Gastrocnemius medialis (tissue), 4 donors: ENCODE measurements at regions of chr17 and their contacts with region 1.

Region 1: DNA sequence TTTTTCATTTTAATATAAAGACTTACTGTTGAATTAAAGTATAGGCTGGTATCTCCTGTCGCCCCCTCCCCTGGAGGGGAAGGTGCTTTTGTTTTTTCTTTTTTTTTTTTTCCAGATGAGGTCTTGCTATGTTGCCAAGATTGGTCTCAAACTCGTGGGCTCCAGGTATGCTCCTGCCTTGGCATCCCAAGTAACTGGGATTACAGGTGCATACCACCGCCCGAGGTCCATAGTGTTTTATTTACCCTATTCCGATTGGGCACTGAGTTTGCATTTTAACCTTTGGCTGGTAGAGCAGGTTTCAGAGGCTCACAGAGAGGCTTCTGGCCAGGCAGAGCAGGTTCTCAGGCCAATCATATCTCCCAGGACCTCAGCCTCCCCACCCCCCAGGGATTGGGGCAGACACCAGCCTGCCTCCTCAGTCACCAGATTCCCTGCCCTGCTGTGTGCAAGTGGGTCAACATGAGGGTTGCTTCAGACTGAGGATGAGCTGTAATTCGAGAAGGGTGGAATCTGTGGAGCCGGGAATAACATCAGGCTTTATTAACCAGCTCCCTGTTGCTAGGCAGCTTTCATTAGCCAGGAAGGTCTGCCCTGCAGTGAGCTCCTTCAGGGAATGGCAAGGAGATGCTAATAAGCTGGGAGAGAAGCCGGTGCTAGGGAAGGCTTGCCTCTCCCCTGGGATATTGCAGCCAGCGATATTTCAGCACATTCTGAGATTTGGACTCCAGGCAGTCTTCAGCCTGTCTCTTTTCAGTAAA is 10.4 kb downstream of the SGSM2 start:
- DNase-seq: peak; percentile 87 to 91
- ATAC-seq: peak; percentile 98 to 99
- H3K4me3 ChIP-seq: no peak overlapping the region
- H3K27ac ChIP-seq: peak overlapping the region; percentile 79 to 87 (median 84)
- H3K4me1 ChIP-seq: peaks cover 11 to 14% of the 10 kb centered on the region in 2 donors
- H3K27me3 ChIP-seq: no peaks in the 10 kb centered on the region
- CTCF ChIP-seq: no peak
- POLR2A ChIP-seq: no peak

Region 2: DNA sequence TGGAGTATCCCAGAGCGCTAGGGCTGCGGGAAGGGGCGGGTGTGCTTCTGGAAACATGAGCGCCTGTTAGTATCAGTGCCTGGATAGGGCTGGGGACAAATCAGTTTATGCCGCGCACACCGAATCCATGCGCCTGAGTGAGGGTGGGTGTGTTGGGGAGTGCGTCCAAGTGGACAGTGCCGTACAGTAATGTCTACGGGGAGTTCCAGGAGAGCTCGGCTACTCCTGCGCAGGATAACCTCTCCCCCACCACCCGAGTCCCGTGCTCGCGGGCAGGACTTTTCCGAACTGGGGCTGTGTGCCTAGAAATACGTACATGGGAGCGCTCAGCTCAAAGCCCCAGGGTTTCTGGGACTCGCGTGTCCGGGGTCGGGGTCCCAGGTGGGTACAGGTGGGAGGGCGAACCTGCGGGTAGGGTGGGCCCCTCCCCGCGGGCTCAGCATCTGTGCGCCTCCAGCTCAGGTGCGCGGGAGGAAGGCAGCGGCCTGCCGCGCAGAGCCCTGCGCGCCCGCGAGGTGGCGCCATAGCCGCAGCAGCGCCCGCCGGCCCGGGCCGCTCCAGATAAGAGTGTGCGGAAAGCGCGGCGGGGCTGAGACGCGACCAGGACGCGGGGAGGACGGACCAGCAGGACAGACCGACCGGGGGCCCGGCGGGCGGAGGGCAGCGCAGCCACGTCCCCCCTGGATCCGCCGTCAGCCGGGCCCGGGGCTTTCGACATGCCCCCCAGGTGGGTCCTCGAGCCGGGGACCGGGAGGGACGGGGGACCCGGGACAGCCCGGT is 293.0 kb before region 1 on chr17 and contains the start of gene HIC1:
- in situ Hi-C with region 1: no loop called
- intact Hi-C with region 1: loop called (anchors 5 kb)
- DNase-seq: peak; percentile 52 to 63
- ATAC-seq: peak; percentile 53 to 63
- H3K4me3 ChIP-seq: peak within 1 kb of the TSS; percentile 52 to 67 (median 64)
- H3K27ac ChIP-seq: peak within 1 kb of the TSS; percentile 70 to 82 (median 76)
- H3K4me1 ChIP-seq: peaks cover 0 to 28% of the 10 kb centered on the region in 2 donors
- H3K27me3 ChIP-seq: peaks cover 0 to 14% (median 0%) of the 10 kb centered on the region in 3 donors
- CTCF ChIP-seq: peak; percentile 78 to 99 (median 98)
- POLR2A ChIP-seq: peak; percentile 55 to 71
- total RNA-seq, gene HIC1: 4.6 to 9.6 (median 6.9) TPM

Region 3: GRCh38 chr17:2303204-2304188 is 44.2 kb before region 1 on chr17 and contains the starts of genes SMG6 and SRR:
- in situ Hi-C with region 1: no loop called
- intact Hi-C with region 1: loop called (anchors 2 kb)
- DNase-seq: peak; percentile 81 to 89
- ATAC-seq: peak; percentile 93 to 94
- H3K4me3 ChIP-seq: peak within 1 kb of the TSS; percentile 66 to 83 (median 79)
- H3K27ac ChIP-seq: peak within 1 kb of the TSS; percentile 81 to 92 (median 90)
- H3K4me1 ChIP-seq: peaks cover 11 to 12% of the 10 kb centered on the region in 2 donors
- H3K27me3 ChIP-seq: no peaks in the 10 kb centered on the region
- CTCF ChIP-seq: peak in 1 of 5 experiments; percentile 18
- POLR2A ChIP-seq: peak; percentile 78 to 82
- total RNA-seq, gene SMG6: 20.5 to 27.8 (median 23.0) TPM
- total RNA-seq, gene SRR: 3.0 to 20.0 (median 10.7) TPM

Region 4: GRCh38 chr17:2336215-2336851 is 11.4 kb before region 1 on chr17 and contains the start of gene TSR1:
- in situ Hi-C with region 1: no loop called
- intact Hi-C with region 1: loop called (anchors 2 kb)
- DNase-seq: peak; percentile 86 to 89
- ATAC-seq: peak; percentile 85 to 88
- H3K4me3 ChIP-seq: peak within 1 kb of the TSS; percentile 71 to 90 (median 82)
- H3K27ac ChIP-seq: peak within 1 kb of the TSS; percentile 87 to 94 (median 92)
- H3K4me1 ChIP-seq: peaks cover 14 to 27% of the 10 kb centered on the region in 2 donors
- H3K27me3 ChIP-seq: no peaks in the 10 kb centered on the region
- CTCF ChIP-seq: peak in 2 of 5 experiments; percentile 35
- POLR2A ChIP-seq: peak; percentile 91
- total RNA-seq, gene TSR1: 76.7 to 94.1 (median 84.7) TPM

Region 5: DNA sequence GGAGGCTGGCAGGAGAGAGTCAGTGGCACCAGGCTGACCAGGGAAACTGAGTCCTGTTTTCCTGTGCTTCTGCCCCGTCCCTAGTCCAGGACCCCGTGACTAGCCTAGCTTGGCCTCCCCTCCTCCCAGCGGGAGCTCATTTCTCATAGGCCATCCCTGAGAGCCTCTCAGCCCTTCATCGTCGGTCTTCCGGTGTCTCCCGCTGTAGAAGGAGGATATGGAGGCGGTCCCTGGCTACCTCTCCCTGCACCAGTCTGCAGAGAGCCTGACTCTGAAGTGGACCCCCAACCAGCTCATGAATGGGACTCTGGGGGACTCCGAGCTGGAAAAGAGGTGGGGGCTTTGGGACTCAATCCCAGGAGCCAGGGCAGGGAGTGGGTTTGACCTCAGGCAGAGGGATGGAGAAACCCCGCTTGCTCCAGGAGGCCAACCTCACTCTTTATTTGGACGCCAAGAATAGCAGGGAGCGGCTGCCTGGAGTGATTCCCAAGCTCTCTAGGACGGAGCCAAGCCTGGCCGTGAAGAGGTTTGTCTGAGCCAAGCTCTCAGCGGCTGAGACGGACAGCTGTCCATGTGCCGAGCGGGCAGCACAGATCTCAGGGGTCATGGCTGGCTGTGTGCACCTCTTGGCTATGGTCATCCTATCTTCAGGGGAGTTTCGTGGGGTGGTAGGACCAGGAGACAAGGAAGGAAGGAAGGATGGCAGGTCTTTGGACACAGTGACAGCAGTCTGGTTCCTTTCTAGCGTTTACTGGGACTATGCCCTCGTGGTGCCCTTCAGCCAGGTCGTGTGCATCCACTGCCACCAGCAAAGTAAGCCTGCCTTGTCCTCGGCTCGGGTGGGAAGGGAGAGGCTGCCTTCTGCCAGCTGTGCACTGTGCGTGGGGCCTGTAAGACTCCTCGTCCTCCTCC is 16.4 kb after region 1 on chr17:
- in situ Hi-C with region 1: no loop called
- intact Hi-C with region 1: loop called (anchors 1 kb)
- DNase-seq: peak; percentile 76 to 89
- ATAC-seq: peak; percentile 94 to 96
- H3K4me3 ChIP-seq: no peak overlapping the region
- H3K27ac ChIP-seq: peak overlapping the region; percentile 58 to 71 (median 64)
- H3K4me1 ChIP-seq: peaks cover 19 to 21% of the 10 kb centered on the region in 2 donors
- H3K27me3 ChIP-seq: no peaks in the 10 kb centered on the region
- CTCF ChIP-seq: no peak
- POLR2A ChIP-seq: no peak

Region 6: DNA sequence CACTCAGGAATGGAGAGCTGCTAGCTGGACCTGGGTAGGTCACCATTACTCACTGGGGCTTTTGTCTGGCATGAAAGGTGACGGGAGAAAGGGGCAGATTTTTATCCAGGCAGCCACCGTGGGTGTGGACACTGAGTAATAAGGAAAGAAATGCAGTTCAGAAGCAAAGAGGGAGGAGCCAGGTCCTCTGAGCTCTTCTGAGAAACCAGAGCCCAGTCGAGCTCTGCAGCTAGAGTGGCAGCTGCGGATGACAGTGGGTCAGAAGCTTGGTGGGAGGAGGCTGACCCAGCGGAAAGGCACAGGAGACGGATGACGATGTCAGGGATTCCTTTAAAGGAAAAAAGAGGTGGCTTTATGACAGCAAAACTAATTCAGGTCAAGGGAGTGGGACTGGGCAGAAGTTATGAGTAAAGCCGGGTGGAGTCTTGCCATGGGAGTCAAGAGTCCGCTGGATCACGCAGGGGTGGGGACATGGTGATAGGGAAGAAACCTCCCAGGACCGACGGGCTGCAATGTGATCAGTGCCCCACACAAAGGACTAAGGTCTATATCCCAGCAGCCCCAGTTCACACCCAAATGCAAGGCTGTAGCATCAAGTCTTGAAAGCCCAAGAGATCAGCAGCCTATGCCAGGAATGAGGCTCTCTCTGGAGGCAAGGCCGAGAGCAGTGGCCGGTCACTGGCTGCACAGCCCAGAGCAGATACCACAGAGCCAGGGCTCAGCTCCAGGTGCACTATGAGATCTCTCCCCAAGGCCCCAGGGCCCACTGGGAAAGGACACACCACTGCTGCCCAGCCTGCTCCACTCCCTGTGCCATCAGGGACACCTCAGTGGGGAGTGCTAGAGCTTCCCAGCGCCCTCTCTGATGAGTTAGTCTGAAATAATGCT is 59.4 kb after region 1 on chr17:
- in situ Hi-C with region 1: no loop called
- intact Hi-C with region 1: no loop called
- DNase-seq: peak; percentile 51 to 76
- ATAC-seq: peak; percentile 70
- H3K4me3 ChIP-seq: no peak overlapping the region
- H3K27ac ChIP-seq: peak overlapping the region; percentile 75 to 99 (median 81)
- H3K4me1 ChIP-seq: peaks cover 39 to 48% of the 10 kb centered on the region in 2 donors
- H3K27me3 ChIP-seq: no peaks in the 10 kb centered on the region
- CTCF ChIP-seq: no peak
- POLR2A ChIP-seq: peak; percentile 18 to 38

Region 7: GRCh38 chr17:2926019-2926650 is 578.4 kb after region 1 on chr17:
- in situ Hi-C with region 1: no loop called
- intact Hi-C with region 1: no loop called
- DNase-seq: no peak
- ATAC-seq: no peak
- H3K4me3 ChIP-seq: no peak overlapping the region
- H3K27ac ChIP-seq: no peak overlapping the region
- H3K4me1 ChIP-seq: no peaks in the 10 kb centered on the region
- H3K27me3 ChIP-seq: peaks cover 0 to 5% (median 0%) of the 10 kb centered on the region in 3 donors
- CTCF ChIP-seq: no peak
- POLR2A ChIP-seq: no peak